Sciatic nerve (tissue), 2 donors: ENCODE measurements at regions of chr6 and their contacts with region 1.

Region 1: DNA sequence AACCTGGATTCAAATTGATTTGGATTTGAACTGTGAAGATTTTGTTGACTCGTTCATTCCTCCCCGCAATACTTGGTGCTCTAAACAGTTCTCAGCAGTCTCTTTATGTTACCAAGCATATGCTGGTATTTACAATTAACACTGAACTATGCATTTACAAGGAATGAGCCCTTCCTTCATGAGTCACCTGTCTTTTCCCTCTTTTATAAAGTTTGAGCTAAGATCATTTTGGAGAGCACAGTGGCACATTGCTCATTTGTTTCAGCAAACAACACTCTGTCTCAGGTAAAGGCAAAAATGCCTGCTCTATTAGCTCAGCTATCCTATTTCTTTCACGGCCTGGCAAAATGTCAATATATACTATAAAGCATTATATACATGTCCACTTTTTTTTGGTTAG is 285.4 kb downstream of the PHACTR1 start:
- DNase-seq: no peak
- ATAC-seq: no peak

Region 2: DNA sequence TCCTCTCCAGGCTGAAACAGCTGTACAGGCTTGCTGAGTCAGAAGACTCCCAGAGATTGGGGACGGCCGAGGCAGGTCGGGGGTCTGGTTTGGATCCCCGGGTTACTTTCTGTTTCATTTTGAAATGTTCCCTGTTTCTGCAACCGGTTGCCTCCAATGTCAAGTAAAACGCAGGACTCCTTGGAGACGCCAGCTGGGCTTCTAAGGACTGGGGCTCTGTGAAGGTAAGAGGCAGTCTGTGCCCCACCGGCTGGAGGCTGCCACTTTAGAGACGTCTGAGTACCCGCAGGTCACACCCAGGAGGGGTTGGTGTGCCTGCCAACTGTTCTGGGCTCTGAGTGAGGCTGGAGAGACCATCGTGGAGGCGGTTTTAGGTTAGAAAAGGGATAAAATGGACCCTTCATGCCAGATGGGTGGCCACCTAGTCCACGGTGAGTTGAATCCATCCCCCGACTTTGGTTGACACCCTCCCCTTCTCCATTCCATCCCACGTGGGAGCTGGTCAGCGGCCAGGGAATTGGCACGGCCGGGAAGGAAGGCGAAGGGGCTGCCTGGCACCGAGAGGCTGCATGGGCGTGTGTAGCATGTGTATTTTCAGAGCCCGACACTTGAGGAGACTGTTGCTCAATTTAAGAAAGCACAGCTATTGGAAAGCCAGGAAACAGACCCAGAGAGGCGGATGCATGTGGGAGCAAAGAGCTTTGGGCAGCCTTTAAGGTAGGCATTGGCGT is 44.4 kb before region 1 on chr6:
- intact Hi-C with region 1: loop called (anchors 1 kb)
- DNase-seq: peak; percentile 69
- ATAC-seq: peak; percentile 95